IMR-90 (cell line): ENCODE measurements at regions of chr16 and their contacts with region 1.

Region 1: DNA sequence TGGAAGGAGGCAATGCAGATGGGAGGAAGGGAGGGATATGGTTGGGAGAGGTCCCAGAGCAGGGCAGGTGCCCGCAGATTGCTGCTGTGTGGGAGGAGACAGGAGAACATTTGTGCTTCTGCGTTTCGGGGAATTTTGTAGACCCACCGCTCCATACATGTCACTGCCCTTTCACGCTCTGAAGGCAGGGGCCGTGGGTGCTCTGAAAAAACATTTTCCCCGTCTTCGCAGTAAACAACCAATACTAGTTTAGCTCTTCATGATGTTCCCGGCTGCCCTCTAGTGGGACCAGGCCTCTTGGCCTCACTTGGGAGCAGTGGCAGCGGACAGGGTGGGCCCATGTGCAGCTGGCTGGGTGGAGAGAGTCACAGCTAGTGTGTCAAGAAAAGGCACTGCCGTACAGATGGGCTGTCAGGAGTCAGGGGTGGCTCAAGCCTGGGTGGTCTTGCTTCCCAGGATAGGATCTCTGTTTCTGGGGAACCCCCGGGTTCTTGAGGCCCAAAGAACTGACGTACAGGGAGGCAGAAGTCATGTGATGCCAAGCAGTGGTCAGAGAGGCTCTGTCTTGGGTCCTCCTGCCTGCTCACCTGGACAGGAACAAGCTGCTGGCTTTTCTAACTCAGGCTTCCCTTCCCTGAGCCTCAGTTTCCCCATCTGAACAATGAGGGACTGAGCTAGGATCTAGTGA is 46.5 kb upstream of the CPNE2 start:
- DNase-seq: peak; percentile 60
- ATAC-seq: peak; percentile 95
- H3K4me3 ChIP-seq: no peak overlapping the region
- H3K27ac ChIP-seq: no peak overlapping the region
- H3K4me1 ChIP-seq: peaks cover 3% of the 10 kb centered on the region; the same call in 1 of the 2 replicates
- H3K27me3 ChIP-seq: no peaks in the 10 kb centered on the region
- CTCF ChIP-seq: peak; percentile 69
- POLR2A ChIP-seq: no peak
- RAD21 ChIP-seq: peak; percentile 68

Region 2: GRCh38 chr16:56898847-56899246 is 147.0 kb before region 1 on chr16:
- CTCF ChIA-PET with region 1: no interaction called
- POLR2A ChIA-PET with region 1: no interaction called
- dilution Hi-C with region 1: no loop called
- in situ Hi-C with region 1: no loop called
- intact Hi-C with region 1: no loop called
- DNase-seq: no peak
- ATAC-seq: no peak
- H3K4me3 ChIP-seq: no peak overlapping the region
- H3K27ac ChIP-seq: no peak overlapping the region
- H3K4me1 ChIP-seq: no peaks in the 10 kb centered on the region
- H3K27me3 ChIP-seq: peaks cover 39% of the 10 kb centered on the region
- CTCF ChIP-seq: no peak
- POLR2A ChIP-seq: no peak
- RAD21 ChIP-seq: no peak

Region 3: GRCh38 chr16:56964243-56965148 is 81.3 kb before region 1 on chr16:
- CTCF ChIA-PET with region 1: no interaction called
- POLR2A ChIA-PET with region 1: no interaction called
- dilution Hi-C with region 1: no loop called
- in situ Hi-C with region 1: no loop called
- intact Hi-C with region 1: loop called (anchors 10 kb)
- DNase-seq: peak; percentile 84
- ATAC-seq: peak; percentile 86
- H3K4me3 ChIP-seq: no peak overlapping the region
- H3K27ac ChIP-seq: peak overlapping the region; percentile 4; the same call in 1 of the 2 replicates
- H3K4me1 ChIP-seq: peaks cover 32% of the 10 kb centered on the region
- H3K27me3 ChIP-seq: no peaks in the 10 kb centered on the region
- CTCF ChIP-seq: peak; percentile 61
- POLR2A ChIP-seq: no peak
- RAD21 ChIP-seq: peak; percentile 45

Region 4: DNA sequence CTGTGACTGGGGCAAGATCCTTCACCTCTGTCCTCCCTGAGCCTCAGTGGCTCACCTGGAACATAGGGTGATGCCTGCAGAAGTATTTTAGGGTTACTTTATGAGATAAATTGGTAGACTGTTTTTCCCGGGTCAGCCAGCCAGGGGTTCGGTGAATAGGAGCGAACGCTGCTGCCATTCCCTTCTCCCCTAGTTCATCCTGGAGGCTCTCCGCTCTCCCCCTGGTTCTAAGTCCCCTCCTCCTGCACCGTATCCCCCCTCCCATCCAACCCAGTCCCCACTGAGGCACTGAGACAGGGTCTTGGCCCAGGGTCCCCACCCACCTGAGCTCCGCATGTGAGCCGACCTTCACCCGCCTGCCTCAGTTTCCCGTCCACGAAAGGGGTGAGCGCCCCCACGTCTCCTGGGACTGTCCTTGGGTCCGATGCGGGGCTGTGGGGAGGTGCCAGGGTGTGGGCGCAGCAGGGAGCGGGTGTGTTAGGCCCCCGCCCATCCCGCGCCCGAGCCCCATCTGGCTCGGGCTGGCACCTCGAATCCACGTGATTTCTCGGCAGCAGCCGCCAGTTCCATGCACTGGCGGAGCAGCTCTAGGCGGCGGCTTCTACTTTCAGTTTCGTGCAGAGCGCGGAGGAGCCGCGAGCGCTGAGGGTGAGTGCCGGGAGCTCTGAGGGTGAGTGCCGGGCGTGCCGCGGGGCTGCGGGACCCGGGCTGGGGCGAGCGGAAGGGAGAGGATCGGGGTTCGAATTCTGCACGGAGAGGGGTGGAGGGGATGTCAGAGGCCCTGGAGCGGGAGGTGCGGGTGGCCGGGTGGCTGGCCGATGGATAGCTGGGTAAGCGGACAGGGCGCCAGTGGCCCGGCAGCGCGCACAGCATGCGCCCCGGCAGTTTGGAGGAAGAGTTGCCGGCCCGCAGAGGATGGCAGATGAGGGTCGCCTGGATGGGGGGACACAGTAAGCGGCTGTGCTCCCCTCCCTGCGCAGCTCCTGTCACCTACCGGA is 56.6 kb before region 1 on chr16 and contains the start of gene NLRC5:
- CTCF ChIA-PET with region 1: no interaction called
- POLR2A ChIA-PET with region 1: no interaction called
- dilution Hi-C with region 1: no loop called
- in situ Hi-C with region 1: no loop called
- intact Hi-C with region 1: loop called (anchors 2 kb)
- DNase-seq: peak; percentile 78
- ATAC-seq: peak; percentile 82
- H3K4me3 ChIP-seq: peak within 1 kb of the TSS; percentile 69
- H3K27ac ChIP-seq: peak within 1 kb of the TSS; percentile 76
- H3K4me1 ChIP-seq: peaks cover 28% of the 10 kb centered on the region
- H3K27me3 ChIP-seq: no peaks in the 10 kb centered on the region
- CTCF ChIP-seq: no peak
- POLR2A ChIP-seq: no peak
- RAD21 ChIP-seq: no peak; the same call in 1 of the 2 replicates
- total RNA-seq, gene NLRC5: 5.3 and 9.1 TPM in 2 replicates